ENCODE measurements at regions of chr5 and their contacts with region 1.

Region 1: DNA sequence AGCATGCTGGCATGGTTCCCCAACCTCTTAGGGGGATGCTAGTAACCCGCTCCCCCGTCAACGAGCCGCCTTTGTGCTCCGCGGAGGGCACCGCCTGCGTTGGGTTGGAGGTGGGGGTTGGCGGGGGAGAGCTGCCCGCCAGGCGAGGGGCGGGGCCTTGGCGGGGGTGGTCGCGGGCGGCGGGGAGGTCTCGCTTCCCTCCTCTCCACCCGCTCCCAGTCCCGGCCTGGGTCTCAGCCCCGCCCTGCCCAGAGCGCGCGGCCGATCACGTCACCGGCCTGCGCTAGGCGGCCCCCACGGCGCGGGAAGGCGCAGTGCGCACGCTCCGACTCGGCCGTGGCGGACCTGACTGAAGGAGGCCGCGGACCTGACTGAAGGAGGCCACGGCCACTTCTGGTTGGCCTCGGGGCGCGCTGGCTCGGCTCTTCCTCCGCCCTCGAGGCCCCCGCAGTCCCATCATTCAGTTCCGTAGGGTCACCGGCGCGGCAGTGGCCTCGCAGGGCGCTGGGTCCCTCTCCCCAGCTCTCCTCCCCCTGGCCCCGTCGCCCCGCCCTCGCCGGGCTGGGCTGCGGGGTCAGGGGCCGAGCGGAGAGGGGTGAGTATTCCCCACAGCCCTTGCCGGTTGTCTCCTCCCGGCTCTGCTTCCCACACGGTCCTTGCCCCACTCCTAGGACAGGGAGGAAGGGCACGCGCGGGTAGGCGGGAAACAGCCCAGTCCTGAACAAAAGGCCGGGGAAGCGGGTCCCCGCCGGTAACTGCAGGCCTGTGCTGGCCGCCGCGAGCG is at the start of gene ATG10:
- DNase-seq: peak; percentile 87
- H3K4me3 ChIP-seq: peak within 1 kb of the TSS; percentile 68 to 79
- H3K27ac ChIP-seq: peak within 1 kb of the TSS; percentile 98
- H3K4me1 ChIP-seq: no peaks in the 10 kb centered on the region
- H3K27me3 ChIP-seq: no peaks in the 10 kb centered on the region
- CTCF ChIP-seq: no peak
- POLR2A ChIP-seq: peak; percentile 94
- total RNA-seq, gene ATG10: 3.2 to 16.7 TPM

Region 2: DNA sequence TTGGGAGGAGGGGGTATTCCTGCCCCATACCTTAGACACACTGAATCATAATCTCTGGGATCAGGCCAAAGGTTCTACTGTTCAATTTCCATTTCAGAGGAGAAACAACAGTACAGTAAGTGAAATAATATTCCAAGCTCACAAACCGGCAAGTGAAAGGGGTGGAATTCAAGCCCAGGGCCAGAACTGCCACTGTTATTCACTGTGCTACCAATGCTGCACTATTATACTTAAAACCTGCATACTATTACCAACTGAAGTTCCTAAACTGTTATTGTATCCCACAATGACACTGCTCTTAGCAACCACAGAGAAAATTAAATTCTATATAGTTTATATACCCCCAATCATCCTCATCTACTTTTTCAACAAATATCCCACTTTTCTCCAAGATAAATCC is 245.6 kb before region 1 on chr5:
- intact Hi-C with region 1: no loop called
- DNase-seq: no peak
- H3K4me3 ChIP-seq: no peak overlapping the region
- H3K27ac ChIP-seq: no peak overlapping the region
- H3K4me1 ChIP-seq: no peaks in the 10 kb centered on the region
- H3K27me3 ChIP-seq: no peaks in the 10 kb centered on the region
- CTCF ChIP-seq: no peak
- POLR2A ChIP-seq: no peak

Region 3: DNA sequence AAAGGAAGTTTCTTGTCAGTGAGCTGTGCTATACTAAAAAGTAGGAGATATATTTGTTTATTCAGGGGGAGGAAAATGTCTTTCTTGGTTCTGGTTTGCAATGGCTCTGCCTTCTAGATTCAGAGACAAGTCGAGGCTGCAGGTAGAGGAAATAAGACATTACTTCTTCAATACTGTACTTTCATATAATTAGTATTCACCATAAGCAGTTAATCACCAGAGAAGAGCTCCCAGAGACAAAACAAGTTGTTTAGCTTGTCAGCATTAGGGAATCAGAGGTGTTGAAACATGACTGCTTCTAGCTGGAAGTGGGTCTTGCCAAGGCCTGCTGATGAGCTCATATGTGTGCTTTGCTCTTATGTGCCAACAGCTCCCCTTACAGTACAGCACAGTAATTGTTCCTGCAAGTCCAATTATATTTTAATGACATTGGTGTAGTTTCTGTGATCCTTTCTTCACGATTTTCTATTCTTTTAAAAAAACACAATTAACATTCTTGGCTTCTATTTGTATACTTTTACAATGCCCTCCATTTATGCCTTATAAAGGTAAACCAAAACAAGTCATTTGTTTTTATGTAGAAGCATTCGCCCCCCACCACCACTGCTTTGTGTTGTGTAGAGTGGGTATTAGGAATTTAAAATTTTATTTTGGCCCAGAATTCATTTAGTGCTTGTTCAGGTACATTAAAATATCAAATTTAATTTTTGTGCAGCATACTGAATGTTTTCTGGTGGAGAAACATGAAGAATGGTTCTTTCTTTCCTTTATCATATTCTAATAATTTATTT is 194.0 kb after region 1 on chr5:
- intact Hi-C with region 1: loop called (anchors 5 kb)
- DNase-seq: peak; percentile 78
- H3K4me3 ChIP-seq: no peak overlapping the region
- H3K27ac ChIP-seq: peak overlapping the region; percentile 37 to 39
- H3K4me1 ChIP-seq: peaks cover 5% of the 10 kb centered on the region
- H3K27me3 ChIP-seq: no peaks in the 10 kb centered on the region
- CTCF ChIP-seq: peak in 3 of 4 experiments; percentile 71 to 84 (median 81)
- POLR2A ChIP-seq: no peak

Measured in prostate gland (tissue), 2 donors.